OCI-LY7 (cell line): ENCODE measurements at regions of chr18 and their contacts with region 1.

Region 1: DNA sequence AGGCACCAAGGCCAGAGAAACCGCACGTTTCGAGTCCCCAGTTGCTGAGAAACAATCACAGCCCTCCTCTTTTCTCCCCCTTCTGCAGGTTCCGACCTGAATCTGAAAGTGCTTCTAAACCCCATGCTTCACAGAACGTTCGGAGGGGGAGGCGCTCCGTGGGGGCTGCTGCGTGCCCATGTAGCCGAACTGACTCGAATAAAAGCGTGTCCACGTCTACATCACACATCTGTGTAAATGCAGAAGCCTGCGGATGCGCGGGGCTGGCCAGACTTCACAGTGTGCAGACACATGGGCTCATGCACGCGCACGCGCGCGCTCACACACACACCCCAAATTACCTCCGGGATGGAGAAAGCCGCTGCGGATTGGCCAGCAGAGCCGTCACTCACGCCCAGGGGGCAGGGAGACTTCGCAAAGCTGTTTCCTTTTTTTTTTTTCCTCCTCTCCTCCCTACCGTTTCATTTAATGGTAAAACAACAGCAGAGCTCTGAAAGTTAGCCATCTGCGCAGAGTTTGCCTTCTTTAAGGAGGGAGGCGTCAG is 2.3 kb downstream of the ZNF516 start:
- DNase-seq: peak; percentile 95
- H3K4me3 ChIP-seq: peak overlapping the region; percentile 77
- H3K27ac ChIP-seq: peak overlapping the region; percentile 86
- H3K4me1 ChIP-seq: peaks cover 41% of the 10 kb centered on the region
- CTCF ChIP-seq: no peak

Region 2: GRCh38 chr18:75209129-75209950 is 1283.4 kb before region 1 on chr18 and contains the start of gene PTGR3:
- CTCF ChIA-PET with region 1: no interaction called
- POLR2A ChIA-PET with region 1: no interaction called
- intact Hi-C with region 1: loop called (anchors 10 kb)
- DNase-seq: peak; percentile 70
- H3K4me3 ChIP-seq: peak within 1 kb of the TSS; percentile 86
- H3K27ac ChIP-seq: peak within 1 kb of the TSS; percentile 74
- H3K4me1 ChIP-seq: peaks cover 13% of the 10 kb centered on the region
- CTCF ChIP-seq: no peak
- total RNA-seq, gene PTGR3: 1.8 and 3.0 TPM in 2 replicates

Region 3: GRCh38 chr18:76633588-76634269 is 141.0 kb after region 1 on chr18:
- CTCF ChIA-PET with region 1: no interaction called
- POLR2A ChIA-PET with region 1: no interaction called
- intact Hi-C with region 1: no loop called
- DNase-seq: no peak
- H3K4me3 ChIP-seq: no peak overlapping the region
- H3K27ac ChIP-seq: no peak overlapping the region
- H3K4me1 ChIP-seq: no peaks in the 10 kb centered on the region
- CTCF ChIP-seq: 0 out of 2 replicates have a peak, but pooled peaks have one; percentile 10

Region 4: DNA sequence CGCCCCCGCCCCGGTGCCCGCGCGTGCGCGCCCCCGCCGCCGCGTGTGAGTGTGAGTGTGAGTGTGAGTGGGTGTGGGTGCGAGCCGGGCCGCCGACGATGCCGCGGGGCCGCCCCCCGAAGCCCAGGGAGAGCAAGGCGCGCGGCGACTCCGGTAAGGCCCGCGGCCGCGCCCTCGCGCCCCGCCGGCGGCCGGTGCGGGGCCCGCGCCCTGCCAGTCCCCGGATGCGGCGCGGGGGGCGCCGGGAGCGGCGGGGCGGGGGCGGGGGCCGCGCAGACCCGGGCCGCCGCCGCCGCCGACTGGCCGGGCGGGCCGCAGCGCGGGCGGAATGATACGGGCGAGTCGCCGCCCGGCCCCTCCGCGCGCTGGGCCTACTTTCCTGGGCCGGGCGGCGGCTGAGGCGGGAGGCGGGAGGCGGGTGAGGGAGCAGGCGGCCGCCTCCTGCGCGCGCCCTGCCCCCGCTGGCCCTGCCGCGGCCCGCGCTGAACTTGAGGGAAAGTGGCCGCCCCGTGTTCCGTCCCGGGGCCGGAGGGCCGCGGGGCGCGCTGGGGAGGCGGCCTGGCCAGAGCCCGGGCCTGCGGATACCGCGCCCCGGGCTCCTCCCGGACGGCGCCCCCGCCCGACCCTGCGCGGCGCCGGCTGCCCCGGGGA is 329.9 kb after region 1 on chr18 and contains the start of gene ZNF236:
- CTCF ChIA-PET with region 1: no interaction called
- POLR2A ChIA-PET with region 1: no interaction called
- intact Hi-C with region 1: loop called (anchors 2 kb)
- DNase-seq: peak; percentile 74
- H3K4me3 ChIP-seq: peak within 1 kb of the TSS; percentile 98
- H3K27ac ChIP-seq: peak within 1 kb of the TSS; percentile 73
- H3K4me1 ChIP-seq: peaks cover 41% of the 10 kb centered on the region
- CTCF ChIP-seq: no peak
- total RNA-seq, gene ZNF236: 6.6 and 8.4 TPM in 2 replicates

Region 5: DNA sequence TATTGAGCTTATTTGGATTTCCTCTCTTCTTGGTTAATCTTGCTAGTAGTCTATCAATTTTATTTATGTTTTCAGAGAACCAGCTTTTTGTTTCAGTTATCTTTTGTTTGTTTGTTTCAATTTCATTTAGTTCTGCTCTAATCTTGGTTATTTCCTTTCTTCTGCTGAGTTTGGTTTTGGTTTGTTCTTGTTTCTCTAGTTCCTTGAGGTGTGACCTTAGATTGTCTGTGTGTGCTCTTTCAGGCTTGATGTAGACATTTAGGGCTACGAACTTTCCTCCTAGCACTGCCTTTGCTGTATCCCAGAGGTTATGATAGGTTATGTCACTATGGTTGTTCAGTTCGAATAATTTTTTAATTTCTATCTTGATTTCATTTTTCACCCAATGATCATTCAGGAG is 471.2 kb after region 1 on chr18:
- CTCF ChIA-PET with region 1: no interaction called
- POLR2A ChIA-PET with region 1: no interaction called
- intact Hi-C with region 1: loop called (anchors 10 kb)
- DNase-seq: no peak
- H3K4me3 ChIP-seq: peak overlapping the region; percentile 19
- H3K27ac ChIP-seq: peak overlapping the region; percentile 30
- H3K4me1 ChIP-seq: peaks cover 48% of the 10 kb centered on the region
- CTCF ChIP-seq: no peak

Region 6: GRCh38 chr18:77132371-77133050 is 639.8 kb after region 1 on chr18 and contains the start of gene MBP:
- CTCF ChIA-PET with region 1: no interaction called
- POLR2A ChIA-PET with region 1: no interaction called
- intact Hi-C with region 1: loop called (anchors 10 kb)
- DNase-seq: peak; percentile 68
- H3K4me3 ChIP-seq: peak within 1 kb of the TSS; percentile 87
- H3K27ac ChIP-seq: peak within 1 kb of the TSS; percentile 11
- H3K4me1 ChIP-seq: peaks cover 40% of the 10 kb centered on the region
- CTCF ChIP-seq: no peak
- total RNA-seq, gene MBP: 13.5 and 16.4 TPM in 2 replicates